ENCODE measurements at regions of chr9 and their contacts with region 1.

Region 1: GRCh38 chr9:17531642-17532254 is 47.1 kb upstream of the SH3GL2 start:
- DNase-seq: peak in 1 of 3 donors; percentile 77
- ATAC-seq: peak; percentile 54
- H3K4me3 ChIP-seq: no peak overlapping the region
- H3K4me1 ChIP-seq: no peaks in the 10 kb centered on the region
- CTCF ChIP-seq: no peak

Region 2: GRCh38 chr9:17802249-17802857 is 270.6 kb after region 1 on chr9:
- intact Hi-C with region 1: loop called in 1 of 2 experiments (anchors 5 kb)
- DNase-seq: peak in 1 of 3 donors; percentile 46
- ATAC-seq: no peak
- H3K4me3 ChIP-seq: no peak overlapping the region
- H3K4me1 ChIP-seq: no peaks in the 10 kb centered on the region
- CTCF ChIP-seq: no peak